T-cell (primary cell): ENCODE measurements at regions of chr5 and their contacts with region 1.

Region 1: GRCh38 chr5:56142620-56143372 is 90.3 kb downstream of the ANKRD55 start:
- DNase-seq: no peak
- ATAC-seq: peak; percentile 62 to 75 (median 70)
- H3K4me3 ChIP-seq: no peak overlapping the region
- H3K4me3 Mint-ChIP-seq: peak overlapping the region; percentile 43 to 50 (median 49)
- H3K27ac ChIP-seq: peak overlapping the region; percentile 35
- H3K27ac Mint-ChIP-seq: peak overlapping the region; percentile 80 to 94
- H3K4me1 ChIP-seq: peaks cover 23 to 53% of the 10 kb centered on the region in 2 experiments
- H3K4me1 Mint-ChIP-seq: peaks cover 64 to 69% (median 66%) of the 10 kb centered on the region in 3 donors
- H3K27me3 ChIP-seq: no peaks in the 10 kb centered on the region
- H3K27me3 Mint-ChIP-seq: no peaks in the 10 kb centered on the region

Region 2: DNA sequence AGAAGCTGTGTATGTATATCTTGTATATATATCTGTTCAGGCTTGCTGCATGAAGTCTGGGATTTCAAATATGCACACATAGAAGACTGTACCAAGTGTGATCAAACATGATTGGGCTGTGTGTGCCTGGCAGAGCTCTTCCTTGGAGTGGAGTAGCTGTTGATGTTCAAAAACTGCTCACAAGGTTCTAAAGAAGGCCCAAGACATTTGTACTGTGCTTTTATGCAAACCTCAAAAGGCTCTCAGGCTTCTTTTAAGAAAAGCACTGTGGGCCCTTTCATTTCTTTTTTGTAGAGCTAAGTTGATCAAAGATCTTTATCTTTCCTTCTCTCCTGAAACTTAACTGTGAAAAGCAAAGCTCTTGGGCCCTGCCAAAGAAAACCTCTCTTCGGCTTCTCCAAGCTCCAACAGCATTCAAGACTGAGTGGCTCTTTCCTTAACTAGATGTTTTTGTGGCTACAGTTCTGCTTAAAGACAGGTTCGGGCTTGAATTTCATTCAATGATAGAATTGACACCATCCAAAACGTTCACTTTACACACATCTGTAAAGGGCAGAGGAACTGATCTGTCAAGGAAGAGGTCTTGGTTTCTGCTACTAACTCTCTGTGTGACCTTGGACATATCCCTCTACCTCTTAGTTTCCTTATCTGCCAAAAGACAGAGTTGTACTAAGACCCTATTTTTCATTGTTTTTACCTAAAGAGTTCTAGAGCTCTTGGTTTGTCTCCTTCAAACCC is 42.2 kb before region 1 on chr5:
- CTCF ChIA-PET with region 1: no interaction called
- POLR2A ChIA-PET with region 1: interaction called in 1 of 2 experiments, 14 read pairs
- DNase-seq: peak in 2 of 35 experiments; percentile 10 to 40
- ATAC-seq: peak; percentile 51 to 73 (median 58)
- H3K4me3 ChIP-seq: no peak overlapping the region
- H3K4me3 Mint-ChIP-seq: peak overlapping the region; percentile 14 to 68 (median 32)
- H3K27ac ChIP-seq: peak overlapping the region; percentile 34
- H3K27ac Mint-ChIP-seq: peak overlapping the region; percentile 94 to 96
- H3K4me1 ChIP-seq: peaks cover 48 to 51% of the 10 kb centered on the region in 2 experiments
- H3K4me1 Mint-ChIP-seq: peaks cover 83 to 94% (median 84%) of the 10 kb centered on the region in 3 donors
- H3K27me3 ChIP-seq: no peaks in the 10 kb centered on the region
- H3K27me3 Mint-ChIP-seq: no peaks in the 10 kb centered on the region

Region 3: DNA sequence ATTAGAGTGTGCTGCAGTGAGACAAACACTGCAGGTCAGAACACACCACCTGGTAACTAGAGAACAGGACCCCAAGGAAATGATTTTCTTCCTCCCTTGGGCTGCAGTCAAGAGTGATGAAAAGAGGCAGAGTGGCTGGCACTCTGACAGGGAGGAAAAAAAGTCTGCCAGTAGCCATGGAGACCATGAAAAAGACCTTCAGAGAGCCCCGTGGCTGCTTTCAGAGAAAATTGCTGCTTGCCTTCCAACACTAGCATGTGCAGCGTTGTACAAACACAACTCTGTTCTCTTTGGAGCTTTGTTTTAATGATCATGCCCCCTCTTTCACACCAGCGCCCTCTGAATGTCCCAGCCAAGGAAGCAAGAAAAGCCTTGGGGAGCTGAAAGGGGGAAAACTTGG is 21.6 kb after region 1 on chr5:
- CTCF ChIA-PET with region 1: no interaction called
- POLR2A ChIA-PET with region 1: no interaction called
- DNase-seq: no peak
- ATAC-seq: no peak
- H3K4me3 ChIP-seq: no peak overlapping the region
- H3K4me3 Mint-ChIP-seq: no peak overlapping the region
- H3K27ac ChIP-seq: no peak overlapping the region
- H3K27ac Mint-ChIP-seq: peak overlapping the region in 1 of 2 donors; percentile 61
- H3K4me1 ChIP-seq: peaks cover 16 to 26% of the 10 kb centered on the region in 2 experiments
- H3K4me1 Mint-ChIP-seq: peaks cover 49 to 61% (median 55%) of the 10 kb centered on the region in 3 donors
- H3K27me3 ChIP-seq: no peaks in the 10 kb centered on the region
- H3K27me3 Mint-ChIP-seq: peaks cover 0 to 3% of the 10 kb centered on the region in 2 donors

Region 4: DNA sequence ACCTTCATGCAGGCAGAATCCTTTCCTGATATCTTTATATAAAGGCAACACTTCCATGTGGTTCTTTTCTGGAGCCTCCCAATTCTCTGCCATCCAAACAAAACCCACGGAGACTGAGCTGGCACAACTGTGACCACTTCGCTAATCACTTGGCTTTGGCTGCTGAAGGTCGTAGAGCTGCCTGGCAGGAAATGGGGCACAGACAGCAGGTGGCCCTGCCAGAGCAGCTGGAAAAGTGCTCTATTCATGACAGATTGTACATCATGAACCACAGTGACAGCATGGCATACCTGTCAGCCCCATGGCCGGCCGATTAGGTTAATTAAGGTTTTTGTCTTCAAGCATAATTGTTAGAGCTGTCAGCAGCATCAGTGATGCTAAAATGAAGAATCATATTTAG is 232.2 kb after region 1 on chr5:
- CTCF ChIA-PET with region 1: no interaction called
- POLR2A ChIA-PET with region 1: no interaction called
- DNase-seq: no peak
- ATAC-seq: no peak
- H3K4me3 ChIP-seq: no peak overlapping the region
- H3K4me3 Mint-ChIP-seq: no peak overlapping the region
- H3K27ac ChIP-seq: no peak overlapping the region
- H3K27ac Mint-ChIP-seq: no peak overlapping the region
- H3K4me1 ChIP-seq: no peaks in the 10 kb centered on the region
- H3K4me1 Mint-ChIP-seq: no peaks in the 10 kb centered on the region
- H3K27me3 ChIP-seq: peaks cover 0 to 3% of the 10 kb centered on the region in 2 experiments
- H3K27me3 Mint-ChIP-seq: no peaks in the 10 kb centered on the region

Region 5: GRCh38 chr5:56589481-56589860 is 446.7 kb after region 1 on chr5:
- CTCF ChIA-PET with region 1: no interaction called
- POLR2A ChIA-PET with region 1: no interaction called
- DNase-seq: no peak
- ATAC-seq: no peak
- H3K4me3 ChIP-seq: no peak overlapping the region
- H3K4me3 Mint-ChIP-seq: peak overlapping the region in 1 of 3 donors; percentile 70
- H3K27ac ChIP-seq: peak overlapping the region; percentile 97
- H3K27ac Mint-ChIP-seq: peak overlapping the region; percentile 93 to 96
- H3K4me1 ChIP-seq: peaks cover 40 to 48% of the 10 kb centered on the region in 2 experiments
- H3K4me1 Mint-ChIP-seq: peaks cover 59 to 68% (median 63%) of the 10 kb centered on the region in 3 donors
- H3K27me3 ChIP-seq: no peaks in the 10 kb centered on the region
- H3K27me3 Mint-ChIP-seq: no peaks in the 10 kb centered on the region